ENCODE measurements at regions of chr9 and their contacts with region 1.

Region 1: GRCh38 chr9:87812375-87813118 is 70.1 kb upstream of the SPATA31E1 start:
- DNase-seq: peak; percentile 48 to 60
- ATAC-seq: peak; percentile 81 to 89
- H3K4me3 ChIP-seq: no peak overlapping the region
- H3K27ac ChIP-seq: peak overlapping the region; percentile 6 to 62; a peak in 4 of 6 replicates
- H3K4me1 ChIP-seq: 0 out of 3 replicates have a peak, but pooled peaks cover 4% of the 10 kb centered on the region
- CTCF ChIP-seq: peak; percentile 98
- EP300 ChIP-seq: no peak
- POLR2A ChIP-seq: no peak
- RAD21 ChIP-seq: peak; percentile 97 to 98

Region 2: DNA sequence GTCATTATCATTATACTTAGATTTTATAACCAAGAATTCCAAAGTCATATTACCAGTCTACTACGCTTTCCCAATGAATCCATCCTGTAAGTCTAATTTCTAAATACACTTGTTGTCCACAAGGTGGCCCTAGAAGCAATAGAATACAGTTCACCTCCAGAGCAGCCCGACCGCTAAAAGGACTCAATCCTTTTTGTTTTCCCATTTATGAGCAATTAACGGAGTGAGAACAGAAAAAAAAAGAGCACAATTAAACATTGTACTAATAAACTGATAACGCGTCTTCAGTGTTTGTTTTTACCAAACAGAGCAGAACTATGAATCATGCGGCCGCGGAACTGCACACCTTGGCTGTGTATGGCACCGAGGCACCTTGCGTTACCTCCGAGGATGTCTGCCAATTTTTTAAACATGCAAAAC is 475.6 kb before region 1 on chr9:
- CTCF ChIA-PET with region 1: interaction called, 12 read pairs
- POLR2A ChIA-PET with region 1: no interaction called
- DNase-seq: peak; percentile 44 to 88
- ATAC-seq: peak; percentile 73 to 90
- H3K4me3 ChIP-seq: peak overlapping the region; percentile 48
- H3K27ac ChIP-seq: peak overlapping the region; percentile 73 to 85
- H3K4me1 ChIP-seq: peaks cover 17% of the 10 kb centered on the region
- CTCF ChIP-seq: peak; percentile 92
- EP300 ChIP-seq: no peak
- POLR2A ChIP-seq: no peak
- RAD21 ChIP-seq: peak; percentile 98

Region 3: GRCh38 chr9:87693986-87694755 is 118.4 kb before region 1 on chr9:
- CTCF ChIA-PET with region 1: interaction called, 473 read pairs
- POLR2A ChIA-PET with region 1: no interaction called
- DNase-seq: no peak
- ATAC-seq: no peak
- H3K4me3 ChIP-seq: no peak overlapping the region
- H3K27ac ChIP-seq: no peak overlapping the region
- H3K4me1 ChIP-seq: no peaks in the 10 kb centered on the region
- CTCF ChIP-seq: no peak
- EP300 ChIP-seq: no peak
- POLR2A ChIP-seq: no peak
- RAD21 ChIP-seq: no peak

Region 4: GRCh38 chr9:87707805-87708506 is 104.6 kb before region 1 on chr9:
- CTCF ChIA-PET with region 1: interaction called, 13 read pairs
- POLR2A ChIA-PET with region 1: no interaction called
- DNase-seq: no peak
- ATAC-seq: no peak
- H3K4me3 ChIP-seq: no peak overlapping the region
- H3K27ac ChIP-seq: peak overlapping the region in 1 of 2 experiments; percentile 16; a peak in 1 of 6 replicates
- H3K4me1 ChIP-seq: peaks cover 37% of the 10 kb centered on the region
- CTCF ChIP-seq: no peak
- EP300 ChIP-seq: no peak
- POLR2A ChIP-seq: no peak
- RAD21 ChIP-seq: no peak

Region 5: GRCh38 chr9:87725900-87726709 is 86.4 kb before region 1 on chr9 and contains the start of gene CTSL:
- CTCF ChIA-PET with region 1: interaction called, 57 read pairs
- POLR2A ChIA-PET with region 1: interaction called, 4 read pairs
- DNase-seq: peak; percentile 89 to 92
- ATAC-seq: peak; percentile 94 to 96
- H3K4me3 ChIP-seq: peak within 1 kb of the TSS; percentile 80
- H3K27ac ChIP-seq: peak within 1 kb of the TSS; percentile 92 to 97
- H3K4me1 ChIP-seq: peaks cover 47% of the 10 kb centered on the region
- CTCF ChIP-seq: peak; percentile 32; the same call in 2 of the 3 replicates
- EP300 ChIP-seq: no peak
- POLR2A ChIP-seq: peak; percentile 99
- RAD21 ChIP-seq: peak; percentile 43 to 48
- polyA plus RNA-seq, gene CTSL: 666 and 725 TPM in 2 replicates

Region 6: DNA sequence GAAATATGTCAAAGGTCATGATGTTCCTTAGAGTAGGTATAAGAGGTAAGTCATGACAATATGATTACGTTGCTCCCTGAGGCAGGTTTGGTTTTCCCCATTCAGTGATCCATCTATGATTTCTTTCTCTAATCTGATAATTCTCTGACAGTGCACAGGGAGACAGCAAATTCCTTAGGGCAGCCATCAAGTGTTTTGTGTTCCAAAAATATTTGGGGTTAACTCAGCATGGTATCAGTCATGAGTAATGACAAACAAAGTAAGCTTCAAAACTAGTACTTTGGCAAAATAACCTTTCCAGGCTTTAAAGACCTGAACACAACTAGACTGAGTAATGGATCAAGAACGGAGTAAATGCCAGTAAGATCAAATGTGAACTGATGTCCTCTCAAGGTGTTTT is 14.8 kb after region 1 on chr9:
- CTCF ChIA-PET with region 1: interaction called, 22 read pairs
- POLR2A ChIA-PET with region 1: no interaction called
- DNase-seq: no peak
- ATAC-seq: no peak
- H3K4me3 ChIP-seq: no peak overlapping the region
- H3K27ac ChIP-seq: no peak overlapping the region
- H3K4me1 ChIP-seq: peaks cover 3% of the 10 kb centered on the region; the same call in 2 of the 3 replicates
- CTCF ChIP-seq: no peak
- EP300 ChIP-seq: no peak
- POLR2A ChIP-seq: no peak
- RAD21 ChIP-seq: no peak

Measured in A549 (cell line).